Activated CD4-positive, alpha-beta T cell treated with anti-CD3 and anti-CD28 coated beads, Interleukin-2, amount 10 ng/mL, durations not matched to agents 24 days and 14 days (primary cell): ENCODE measurements at regions of chr4 and their contacts with region 1.

Region 1: GRCh38 chr4:158850800-158851644 is 82.2 kb downstream of the FNIP2 start:
- DNase-seq: no peak
- H3K4me3 Mint-ChIP-seq: no peak overlapping the region
- H3K27ac Mint-ChIP-seq: no peak overlapping the region
- H3K4me1 Mint-ChIP-seq: peaks cover 17% of the 10 kb centered on the region
- H3K27me3 Mint-ChIP-seq: no peaks in the 10 kb centered on the region

Region 2: DNA sequence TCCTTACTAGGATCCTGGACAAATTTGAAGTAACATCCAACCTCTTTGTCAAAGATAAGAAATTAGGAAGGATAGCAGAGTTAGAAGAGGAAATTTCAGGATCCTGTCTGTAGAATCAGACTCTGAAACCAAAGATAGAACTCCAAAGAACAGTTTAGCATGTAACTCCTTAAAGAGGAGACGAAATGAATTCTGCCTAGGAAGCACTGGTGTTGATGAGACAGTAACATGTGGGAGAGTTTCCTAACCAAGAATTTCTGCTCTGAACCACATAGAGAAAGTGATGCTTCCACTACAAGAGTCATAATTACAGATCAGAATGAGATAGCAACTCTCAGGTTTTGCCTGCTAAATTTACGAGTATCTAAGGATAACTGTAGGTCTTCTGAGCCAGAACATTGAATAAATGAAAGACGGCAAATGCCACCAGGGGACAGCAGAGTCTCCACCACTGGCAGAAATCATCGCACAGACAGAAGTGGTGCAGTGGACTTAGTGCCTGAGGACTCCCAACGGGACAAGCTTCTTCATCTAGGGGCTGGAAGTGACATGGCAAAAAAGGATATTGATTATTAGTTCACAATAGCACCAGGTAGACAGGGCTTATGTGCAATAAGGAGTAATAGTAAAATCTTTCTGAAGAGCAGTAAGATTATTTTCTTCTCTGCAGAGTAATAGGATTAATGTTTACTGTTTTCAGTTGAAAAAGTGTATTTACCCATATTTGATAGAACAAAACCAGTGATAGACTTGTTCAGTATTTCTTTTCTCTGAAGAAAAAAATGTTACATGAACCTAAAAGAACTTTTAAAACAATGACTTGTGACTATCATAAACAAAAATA is 121.1 kb before region 1 on chr4:
- intact Hi-C with region 1: loop called (anchors 1 kb)
- DNase-seq: peak; percentile 85
- H3K4me3 Mint-ChIP-seq: no peak overlapping the region
- H3K27ac Mint-ChIP-seq: no peak overlapping the region
- H3K4me1 Mint-ChIP-seq: peaks cover 26% of the 10 kb centered on the region
- H3K27me3 Mint-ChIP-seq: peaks cover 13% of the 10 kb centered on the region